WTC11 (cell line): ENCODE measurements at regions of chr19 and their contacts with region 1.

Region 1: DNA sequence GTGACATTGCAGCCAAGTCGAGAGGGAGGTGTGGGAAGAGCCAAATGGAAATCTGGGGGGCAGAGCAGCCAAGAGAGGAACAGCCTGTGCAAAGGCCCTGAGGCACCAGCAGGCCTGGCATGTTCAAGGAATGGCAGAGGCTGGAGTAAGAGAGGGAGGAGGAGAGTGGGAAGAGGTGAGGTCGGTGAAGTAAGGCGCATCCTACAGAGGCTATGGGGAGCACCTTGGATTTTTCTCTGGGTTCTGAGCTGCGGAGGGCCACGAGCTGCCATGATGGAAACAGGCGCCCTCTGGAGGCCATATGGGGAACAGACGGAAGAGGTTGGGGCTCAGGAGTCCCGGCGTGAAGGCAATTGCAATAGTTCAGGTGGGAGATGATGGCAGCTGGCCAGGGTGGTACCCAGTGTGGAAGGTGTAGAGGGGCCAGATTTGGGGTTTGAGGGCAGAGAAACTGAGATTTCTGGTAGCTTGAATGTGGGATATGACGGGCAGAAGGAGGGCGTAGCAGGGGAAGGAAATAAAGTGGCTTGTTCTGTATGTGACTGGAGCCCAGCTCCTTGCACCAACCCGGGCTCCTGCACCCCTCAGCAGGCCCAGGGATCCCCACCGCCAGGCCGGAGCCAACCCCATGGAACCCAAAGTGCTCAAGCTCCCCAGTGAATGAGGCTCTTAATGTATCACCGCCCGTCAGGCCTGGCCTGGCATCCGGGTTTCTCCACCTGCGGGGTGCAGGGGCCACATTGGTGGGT is 20.5 kb upstream of the STRN4 start:
- DNase-seq: peak; percentile 78
- ATAC-seq: peak; percentile 93
- H3K4me3 Mint-ChIP-seq: no peak overlapping the region
- H3K27ac Mint-ChIP-seq: peak overlapping the region; percentile 83; the same call in 1 of the 2 replicates
- H3K4me1 Mint-ChIP-seq: no peaks in the 10 kb centered on the region; the same call in 1 of the 2 replicates
- H3K27me3 Mint-ChIP-seq: no peaks in the 10 kb centered on the region
- CTCF ChIP-seq: peak; percentile 71

Region 2: GRCh38 chr19:46746281-46747013 is 20.3 kb before region 1 on chr19 and contains the start of gene STRN4:
- CTCF ChIA-PET with region 1: interaction called, 12 read pairs
- POLR2A ChIA-PET with region 1: no interaction called
- DNase-seq: peak; percentile 54
- ATAC-seq: peak; percentile 15
- H3K4me3 Mint-ChIP-seq: peak within 1 kb of the TSS; percentile 96
- H3K27ac Mint-ChIP-seq: peak within 1 kb of the TSS; percentile 84
- H3K4me1 Mint-ChIP-seq: peaks cover 41% of the 10 kb centered on the region
- H3K27me3 Mint-ChIP-seq: no peaks in the 10 kb centered on the region
- CTCF ChIP-seq: no peak
- total RNA-seq, gene STRN4: 126 to 144 TPM (median 137 TPM) in 3 replicates

Region 3: GRCh38 chr19:46776927-46777911 is 10.5 kb after region 1 on chr19:
- CTCF ChIA-PET with region 1: interaction called, 13 read pairs
- POLR2A ChIA-PET with region 1: interaction called, 3 read pairs
- DNase-seq: peak; percentile 91
- ATAC-seq: peak; percentile 92
- H3K4me3 Mint-ChIP-seq: no peak overlapping the region
- H3K27ac Mint-ChIP-seq: peak overlapping the region; percentile 63
- H3K4me1 Mint-ChIP-seq: no peaks in the 10 kb centered on the region; the same call in 1 of the 2 replicates
- H3K27me3 Mint-ChIP-seq: no peaks in the 10 kb centered on the region
- CTCF ChIP-seq: no peak

Region 4: GRCh38 chr19:46788262-46788967 is 21.7 kb after region 1 on chr19 and contains the start of gene SLC1A5:
- CTCF ChIA-PET with region 1: interaction called, 14 read pairs
- POLR2A ChIA-PET with region 1: interaction called, 4 read pairs
- DNase-seq: peak; percentile 99
- ATAC-seq: peak; percentile 86
- H3K4me3 Mint-ChIP-seq: peak within 1 kb of the TSS; percentile 95
- H3K27ac Mint-ChIP-seq: no peak within 1 kb of the TSS
- H3K4me1 Mint-ChIP-seq: peaks cover 36% of the 10 kb centered on the region
- H3K27me3 Mint-ChIP-seq: peaks cover 16% of the 10 kb centered on the region
- CTCF ChIP-seq: no peak
- total RNA-seq, gene SLC1A5: 173 to 239 TPM (median 187 TPM) in 3 replicates

Region 5: DNA sequence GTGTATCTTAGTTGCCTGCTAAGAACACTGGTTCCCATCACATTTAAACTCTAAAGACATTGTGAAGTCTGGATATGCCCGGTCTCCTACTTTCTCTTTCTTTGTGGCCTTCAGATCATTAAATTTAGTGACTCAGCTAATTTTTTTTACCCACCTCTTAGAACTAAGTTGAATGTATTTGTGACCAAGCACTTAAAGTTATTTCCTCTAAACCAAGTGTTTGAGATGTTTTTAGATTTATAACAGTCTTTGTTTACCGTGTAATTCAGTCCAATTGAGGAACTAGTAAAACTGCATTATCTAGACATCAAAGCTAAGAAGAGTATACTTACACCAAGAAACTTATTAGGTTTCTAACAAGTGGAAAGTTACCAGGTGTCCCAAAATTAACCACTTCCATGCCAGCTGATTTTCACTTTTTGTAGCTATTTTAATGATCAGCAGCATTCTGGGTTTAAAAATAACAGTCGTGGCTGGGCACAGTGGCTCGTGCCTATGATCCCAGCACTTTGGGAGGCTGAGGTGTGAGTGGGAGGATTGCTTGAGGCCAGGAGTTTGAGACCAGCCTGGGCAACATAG is 147.2 kb after region 1 on chr19:
- CTCF ChIA-PET with region 1: no interaction called
- POLR2A ChIA-PET with region 1: no interaction called
- DNase-seq: no peak
- ATAC-seq: no peak
- H3K4me3 Mint-ChIP-seq: no peak overlapping the region
- H3K27ac Mint-ChIP-seq: peak overlapping the region; percentile 57; the same call in 1 of the 2 replicates
- H3K4me1 Mint-ChIP-seq: peaks cover 27% of the 10 kb centered on the region
- H3K27me3 Mint-ChIP-seq: no peaks in the 10 kb centered on the region
- CTCF ChIP-seq: no peak

Region 6: DNA sequence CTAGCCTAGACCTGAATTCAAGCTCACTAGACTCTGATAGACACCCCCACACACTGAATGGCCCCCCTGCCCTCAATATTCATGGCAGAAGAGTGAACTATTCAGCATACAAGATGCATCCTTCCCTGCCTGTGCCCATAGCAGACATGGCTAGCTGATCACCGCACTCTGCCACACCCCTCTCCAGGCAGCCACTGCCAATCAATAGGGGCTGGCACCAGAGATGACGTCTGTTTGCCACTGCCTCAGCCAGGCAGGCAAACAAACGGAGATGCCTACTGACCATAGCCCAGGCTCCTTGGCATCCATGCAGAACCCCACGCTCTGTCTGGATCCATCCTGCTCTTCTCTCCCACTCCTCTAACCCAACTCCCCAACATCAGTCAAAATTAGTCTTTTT is 239.1 kb after region 1 on chr19:
- CTCF ChIA-PET with region 1: no interaction called
- POLR2A ChIA-PET with region 1: no interaction called
- DNase-seq: no peak
- ATAC-seq: peak; percentile 40; the same call in 1 of the 2 replicates
- H3K4me3 Mint-ChIP-seq: no peak overlapping the region
- H3K27ac Mint-ChIP-seq: peak overlapping the region; percentile 7
- H3K4me1 Mint-ChIP-seq: peaks cover 21% of the 10 kb centered on the region
- H3K27me3 Mint-ChIP-seq: peaks cover 9% of the 10 kb centered on the region
- CTCF ChIP-seq: no peak